Endothelial cell of umbilical vein (primary cell): ENCODE measurements at regions of chr20 and their contacts with region 1.

Region 1: GRCh38 chr20:46057856-46058598 is 29.0 kb downstream of the SLC12A5 start:
- DNase-seq: peak; percentile 56
- H3K4me3 ChIP-seq: peak overlapping the region in 2 of 3 experiments; percentile 3 to 26
- H3K27ac ChIP-seq: no peak overlapping the region
- H3K4me1 ChIP-seq: peaks cover 27% of the 10 kb centered on the region
- H3K27me3 ChIP-seq: peaks cover 2 to 23% of the 10 kb centered on the region in 2 experiments
- CTCF ChIP-seq: peak in 1 of 2 donors; percentile 30
- POLR2A ChIP-seq: no peak

Region 2: DNA sequence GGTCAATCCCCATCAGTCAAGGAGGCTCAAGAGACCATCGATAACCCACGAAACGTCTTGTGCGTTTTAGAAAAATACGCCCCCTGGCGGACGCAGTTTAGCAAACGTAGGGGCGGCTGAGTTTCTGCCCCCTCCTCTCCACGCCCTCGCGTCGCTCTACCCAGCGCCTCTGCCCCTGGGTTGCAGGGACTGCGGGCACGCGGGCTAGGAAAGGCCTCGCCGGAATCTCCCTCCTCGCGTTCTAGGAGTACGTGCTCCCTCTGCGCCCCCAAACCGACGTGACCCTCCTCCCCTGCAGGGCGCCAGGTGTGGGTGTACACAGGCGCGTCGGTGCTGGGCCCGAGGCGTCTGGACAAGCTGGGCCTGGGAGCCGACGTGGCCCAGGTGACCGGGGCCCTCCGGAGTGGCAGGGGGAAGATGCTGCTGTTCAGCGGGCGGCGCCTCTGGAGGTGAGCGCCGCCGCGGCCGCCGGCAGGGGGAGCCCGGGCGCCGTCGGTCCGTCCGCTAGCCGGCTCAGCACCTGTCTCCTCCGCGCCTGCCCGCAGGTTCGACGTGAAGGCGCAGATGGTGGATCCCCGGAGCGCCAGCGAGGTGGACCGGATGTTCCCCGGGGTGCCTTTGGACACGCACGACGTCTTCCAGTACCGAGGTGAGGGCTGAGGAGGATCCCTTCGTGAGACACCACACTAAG is 44.1 kb before region 1 on chr20:
- CTCF ChIA-PET with region 1: interaction called, 20 read pairs
- POLR2A ChIA-PET with region 1: no interaction called
- dilution Hi-C with region 1: no loop called
- intact Hi-C with region 1: no loop called
- DNase-seq: peak; percentile 31
- H3K4me3 ChIP-seq: no peak overlapping the region
- H3K27ac ChIP-seq: no peak overlapping the region
- H3K4me1 ChIP-seq: no peaks in the 10 kb centered on the region
- H3K27me3 ChIP-seq: peaks cover 39 to 46% of the 10 kb centered on the region in 2 experiments
- CTCF ChIP-seq: peak; percentile 74 to 85
- POLR2A ChIP-seq: no peak

Region 3: DNA sequence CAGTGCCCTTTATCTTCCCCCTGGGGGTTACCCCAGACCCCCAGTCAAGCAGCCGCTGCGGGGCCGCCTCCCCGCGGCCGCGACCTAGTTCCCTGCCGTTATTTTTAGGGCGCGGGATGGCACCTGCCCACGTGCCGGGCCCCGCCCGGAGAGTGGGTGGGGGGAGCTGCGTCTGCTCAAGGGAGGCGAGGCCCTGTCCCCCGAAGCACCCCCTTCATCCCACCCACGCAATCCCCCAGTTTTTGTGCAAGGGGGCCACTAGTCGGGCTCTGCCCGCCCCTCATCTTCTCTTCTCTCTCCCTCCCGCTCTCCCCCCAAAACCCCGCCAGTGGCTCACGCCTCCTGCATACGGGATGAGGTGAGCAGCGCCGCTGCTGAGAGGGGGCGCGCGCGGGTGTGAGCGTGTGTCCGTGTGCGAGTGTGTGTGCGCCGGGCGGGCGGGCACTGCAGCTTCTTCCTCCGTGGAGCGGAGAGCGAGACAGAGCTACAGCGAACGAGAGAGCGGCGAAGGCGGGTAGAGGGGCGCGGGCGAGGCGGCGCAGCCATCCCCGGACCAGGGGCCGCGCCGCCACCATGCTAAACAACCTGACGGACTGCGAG is 29.2 kb before region 1 on chr20 and contains the start of gene SLC12A5:
- CTCF ChIA-PET with region 1: interaction called, 15 read pairs
- POLR2A ChIA-PET with region 1: no interaction called
- dilution Hi-C with region 1: no loop called
- intact Hi-C with region 1: loop called (anchors 5 kb)
- DNase-seq: no peak
- H3K4me3 ChIP-seq: no peak within 1 kb of the TSS
- H3K27ac ChIP-seq: no peak within 1 kb of the TSS
- H3K4me1 ChIP-seq: no peaks in the 10 kb centered on the region
- H3K27me3 ChIP-seq: peaks cover 45 to 47% of the 10 kb centered on the region in 2 experiments
- CTCF ChIP-seq: no peak
- POLR2A ChIP-seq: no peak
- total RNA-seq, gene SLC12A5: 1.6 and 1.8 TPM in 2 replicates

Region 4: GRCh38 chr20:46070215-46070900 is 12.3 kb after region 1 on chr20:
- CTCF ChIA-PET with region 1: interaction called, 18 read pairs
- POLR2A ChIA-PET with region 1: no interaction called
- dilution Hi-C with region 1: no loop called
- intact Hi-C with region 1: no loop called
- DNase-seq: no peak
- H3K4me3 ChIP-seq: no peak overlapping the region
- H3K27ac ChIP-seq: no peak overlapping the region
- H3K4me1 ChIP-seq: no peaks in the 10 kb centered on the region
- H3K27me3 ChIP-seq: no peaks in the 10 kb centered on the region
- CTCF ChIP-seq: no peak
- POLR2A ChIP-seq: no peak